Activated CD4-positive, alpha-beta T cell treated with anti-CD3 and anti-CD28 coated beads for 36 hours (primary cell): ENCODE measurements at regions of chr1 and their contacts with region 1.

Region 1: GRCh38 chr1:110864287-110864686 is 8.7 kb upstream of the CD53 start:
- DNase-seq: no peak
- ATAC-seq: no peak
- H3K4me3 Mint-ChIP-seq: no peak overlapping the region
- H3K27ac Mint-ChIP-seq: no peak overlapping the region
- H3K4me1 Mint-ChIP-seq: peaks cover 22% of the 10 kb centered on the region
- H3K27me3 Mint-ChIP-seq: no peaks in the 10 kb centered on the region

Region 2: DNA sequence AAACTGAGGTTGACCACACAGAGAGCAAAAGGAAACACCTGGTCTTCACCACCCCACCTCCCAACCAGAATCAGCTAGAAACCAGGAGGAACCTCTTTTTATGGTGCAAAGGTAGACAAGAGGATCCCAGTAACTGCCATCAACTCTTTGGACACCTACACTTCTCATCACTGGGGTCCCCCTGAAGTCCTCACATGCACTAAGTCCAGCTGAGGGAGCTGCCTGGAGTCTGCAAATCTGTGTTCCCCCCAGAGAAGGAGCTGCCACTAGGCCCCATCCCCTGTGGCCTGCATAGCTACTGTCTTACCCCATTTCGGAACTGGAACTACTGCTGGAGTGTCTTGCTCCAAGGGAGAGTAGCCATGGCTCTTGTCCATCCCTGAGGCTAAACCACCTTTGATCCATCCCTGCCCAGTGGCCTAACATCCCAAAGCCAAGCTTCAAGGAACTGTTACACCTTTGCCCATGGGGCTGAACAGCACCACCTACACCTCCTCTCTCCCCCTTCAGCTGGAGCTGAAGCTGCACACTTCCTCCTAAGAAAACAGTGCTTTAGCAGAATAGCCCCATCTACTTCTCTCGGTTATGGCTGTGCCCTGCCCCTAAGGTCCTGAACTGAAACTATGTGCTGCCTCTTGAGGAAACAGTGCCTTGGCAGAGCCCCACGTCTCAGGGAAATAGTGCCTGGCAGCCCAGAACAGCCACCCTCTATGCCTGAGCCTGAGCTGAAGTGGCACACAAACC is 76.8 kb before region 1 on chr1:
- CTCF ChIA-PET with region 1: interaction called, 9 read pairs
- POLR2A ChIA-PET with region 1: no interaction called
- intact Hi-C with region 1: loop called in 1 of 2 experiments (anchors 5 kb)
- DNase-seq: peak; percentile 33
- ATAC-seq: peak; percentile 35
- H3K4me3 Mint-ChIP-seq: peak overlapping the region; percentile 9
- H3K27ac Mint-ChIP-seq: peak overlapping the region; percentile 87
- H3K4me1 Mint-ChIP-seq: peaks cover 60% of the 10 kb centered on the region
- H3K27me3 Mint-ChIP-seq: no peaks in the 10 kb centered on the region

Region 3: GRCh38 chr1:110840718-110841117 is 23.6 kb before region 1 on chr1:
- CTCF ChIA-PET with region 1: no interaction called
- POLR2A ChIA-PET with region 1: no interaction called
- intact Hi-C with region 1: no loop called
- DNase-seq: no peak
- ATAC-seq: no peak
- H3K4me3 Mint-ChIP-seq: no peak overlapping the region
- H3K27ac Mint-ChIP-seq: no peak overlapping the region
- H3K4me1 Mint-ChIP-seq: no peaks in the 10 kb centered on the region
- H3K27me3 Mint-ChIP-seq: no peaks in the 10 kb centered on the region

Region 4: DNA sequence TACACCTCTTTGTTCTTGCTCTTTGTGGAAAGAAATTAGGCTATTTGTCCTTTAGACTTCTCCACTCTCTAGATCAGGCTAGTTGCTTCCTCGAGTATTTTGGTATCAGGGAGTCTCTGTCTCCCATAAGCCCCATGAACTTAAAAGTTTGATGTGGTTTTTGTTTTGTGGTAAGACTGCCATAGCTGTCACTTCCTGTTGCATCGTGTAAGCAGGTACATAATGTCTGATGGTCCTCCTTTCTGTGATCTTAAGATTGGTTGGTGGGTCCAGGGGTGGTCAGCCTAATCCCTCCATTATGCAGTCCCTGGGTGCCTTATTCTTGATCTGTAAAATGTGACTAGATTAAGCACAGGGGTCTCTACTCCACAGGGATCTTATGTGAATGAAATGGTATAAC is 31.8 kb after region 1 on chr1:
- CTCF ChIA-PET with region 1: interaction called, 5 read pairs
- POLR2A ChIA-PET with region 1: no interaction called
- intact Hi-C with region 1: loop called in 1 of 2 experiments (anchors 5 kb)
- DNase-seq: no peak
- ATAC-seq: no peak
- H3K4me3 Mint-ChIP-seq: no peak overlapping the region
- H3K27ac Mint-ChIP-seq: peak overlapping the region; percentile 88
- H3K4me1 Mint-ChIP-seq: peaks cover 84% of the 10 kb centered on the region
- H3K27me3 Mint-ChIP-seq: no peaks in the 10 kb centered on the region